ENCODE measurements at regions of chr4 and their contacts with region 1.

Region 1: DNA sequence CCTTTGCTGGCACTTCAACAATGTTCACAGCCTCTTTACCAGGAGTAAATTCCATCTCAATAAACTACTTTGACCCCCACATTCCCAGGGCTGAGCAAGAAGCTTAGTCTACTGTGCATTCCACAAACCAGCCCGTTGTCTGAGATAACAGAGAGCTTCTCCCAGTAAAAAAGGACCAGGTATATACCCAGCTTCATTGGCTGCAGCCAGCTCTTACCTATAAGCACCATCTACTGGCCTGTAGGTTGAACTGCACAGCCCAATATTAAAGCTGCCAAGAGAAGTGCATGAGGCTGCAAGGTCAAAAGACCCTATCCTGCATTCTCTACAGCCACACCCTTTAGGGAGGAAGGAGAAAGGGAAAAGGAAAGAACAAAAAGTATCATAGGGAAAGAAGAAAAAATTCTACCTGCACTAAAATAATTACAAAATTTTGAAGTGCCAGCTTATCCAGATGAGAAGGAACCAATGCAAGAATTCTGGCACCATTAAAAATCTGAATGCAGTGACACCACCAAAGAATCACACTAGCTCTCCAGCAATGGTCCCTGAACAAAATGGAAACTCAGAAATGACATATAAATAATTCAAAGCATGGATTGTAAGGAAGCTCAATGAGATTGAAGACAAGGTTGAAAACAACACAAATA is 45.7 kb upstream of the INTU start:
- DNase-seq: peak; percentile 16
- H3K4me3 ChIP-seq: no peak overlapping the region
- H3K27ac ChIP-seq: no peak overlapping the region
- H3K4me1 ChIP-seq: no peaks in the 10 kb centered on the region
- H3K27me3 ChIP-seq: no peaks in the 10 kb centered on the region
- CTCF ChIP-seq: peak; percentile 36 to 65
- POLR2A ChIP-seq: no peak

Region 2: DNA sequence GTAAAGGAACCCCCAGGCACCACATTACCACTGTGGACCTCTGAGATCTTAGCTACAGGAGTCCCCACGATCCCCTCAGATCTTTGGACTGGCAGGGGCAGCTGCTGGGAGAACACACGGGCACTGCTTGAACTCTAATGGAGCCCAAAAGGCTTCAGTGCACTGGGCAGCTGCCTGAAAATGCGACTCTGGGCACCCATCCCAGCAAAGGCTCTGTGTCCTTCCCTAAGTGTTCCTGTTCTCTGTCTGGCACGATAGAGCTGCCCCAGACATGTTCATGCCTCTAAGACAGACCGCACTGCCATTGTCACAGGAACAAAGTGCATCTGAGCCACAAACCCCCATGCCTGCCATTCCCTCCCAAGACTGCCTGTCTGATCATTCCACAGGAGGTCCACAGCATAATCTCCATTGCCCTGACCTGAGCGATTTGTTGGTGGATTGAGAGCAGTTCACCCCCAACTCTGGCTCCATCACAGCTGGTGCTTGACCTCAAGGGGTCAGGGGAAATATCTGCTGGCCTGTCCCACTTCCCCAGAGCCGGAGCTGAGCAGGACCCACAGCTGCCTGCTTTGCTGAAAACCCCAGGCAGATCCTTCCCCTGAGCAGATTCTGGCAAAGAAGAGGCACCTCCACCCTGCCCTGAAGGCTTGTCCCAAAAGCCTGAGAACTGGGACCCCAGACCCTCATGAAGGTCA is 390.2 kb before region 1 on chr4:
- CTCF ChIA-PET with region 1: no interaction called
- POLR2A ChIA-PET with region 1: no interaction called
- dilution Hi-C with region 1: no loop called
- intact Hi-C with region 1: no loop called
- DNase-seq: no peak
- H3K4me3 ChIP-seq: no peak overlapping the region
- H3K27ac ChIP-seq: no peak overlapping the region
- H3K4me1 ChIP-seq: no peaks in the 10 kb centered on the region
- H3K27me3 ChIP-seq: no peaks in the 10 kb centered on the region
- CTCF ChIP-seq: no peak
- POLR2A ChIP-seq: no peak

Region 3: GRCh38 chr4:127400276-127400675 is 186.8 kb before region 1 on chr4:
- CTCF ChIA-PET with region 1: no interaction called
- POLR2A ChIA-PET with region 1: no interaction called
- dilution Hi-C with region 1: no loop called
- intact Hi-C with region 1: no loop called
- DNase-seq: no peak
- H3K4me3 ChIP-seq: no peak overlapping the region
- H3K27ac ChIP-seq: no peak overlapping the region
- H3K4me1 ChIP-seq: no peaks in the 10 kb centered on the region
- H3K27me3 ChIP-seq: no peaks in the 10 kb centered on the region
- CTCF ChIP-seq: no peak
- POLR2A ChIP-seq: no peak

Region 4: DNA sequence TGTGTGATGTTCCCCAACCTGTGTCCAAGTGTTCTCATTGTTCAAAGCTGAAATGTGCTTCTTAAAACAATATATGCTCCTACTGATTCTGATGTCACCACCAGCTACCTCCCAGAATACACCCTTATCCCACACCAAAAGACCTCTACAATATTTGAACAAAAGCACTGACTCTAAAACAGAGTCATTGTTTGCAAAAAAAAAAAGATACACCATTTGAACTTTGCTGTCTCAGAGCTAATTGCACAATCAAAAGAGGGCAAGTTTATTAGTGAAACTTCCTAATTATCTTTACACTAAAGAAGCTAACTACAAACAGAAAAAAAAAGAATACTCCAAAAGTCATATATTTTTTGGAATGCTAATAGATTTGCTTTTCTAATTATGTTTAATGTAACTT is 11.6 kb after region 1 on chr4:
- CTCF ChIA-PET with region 1: interaction called, 33 read pairs
- POLR2A ChIA-PET with region 1: no interaction called
- dilution Hi-C with region 1: no loop called
- intact Hi-C with region 1: no loop called
- DNase-seq: no peak
- H3K4me3 ChIP-seq: no peak overlapping the region
- H3K27ac ChIP-seq: no peak overlapping the region
- H3K4me1 ChIP-seq: no peaks in the 10 kb centered on the region
- H3K27me3 ChIP-seq: peaks cover 2 to 14% of the 10 kb centered on the region in 2 experiments
- CTCF ChIP-seq: no peak
- POLR2A ChIP-seq: no peak

Region 5: GRCh38 chr4:127604949-127605709 is 18.1 kb after region 1 on chr4:
- CTCF ChIA-PET with region 1: interaction called, 12 read pairs
- POLR2A ChIA-PET with region 1: no interaction called
- dilution Hi-C with region 1: no loop called
- intact Hi-C with region 1: no loop called
- DNase-seq: peak; percentile 26
- H3K4me3 ChIP-seq: no peak overlapping the region
- H3K27ac ChIP-seq: no peak overlapping the region
- H3K4me1 ChIP-seq: no peaks in the 10 kb centered on the region
- H3K27me3 ChIP-seq: peaks cover 10 to 26% of the 10 kb centered on the region in 2 experiments
- CTCF ChIP-seq: peak; percentile 10 to 15
- POLR2A ChIP-seq: no peak